Activated CD4-positive, alpha-beta T cell treated with anti-CD3 and anti-CD28 coated beads for 36 hours (primary cell): ENCODE measurements at regions of chr17 and their contacts with region 1.

Region 1: DNA sequence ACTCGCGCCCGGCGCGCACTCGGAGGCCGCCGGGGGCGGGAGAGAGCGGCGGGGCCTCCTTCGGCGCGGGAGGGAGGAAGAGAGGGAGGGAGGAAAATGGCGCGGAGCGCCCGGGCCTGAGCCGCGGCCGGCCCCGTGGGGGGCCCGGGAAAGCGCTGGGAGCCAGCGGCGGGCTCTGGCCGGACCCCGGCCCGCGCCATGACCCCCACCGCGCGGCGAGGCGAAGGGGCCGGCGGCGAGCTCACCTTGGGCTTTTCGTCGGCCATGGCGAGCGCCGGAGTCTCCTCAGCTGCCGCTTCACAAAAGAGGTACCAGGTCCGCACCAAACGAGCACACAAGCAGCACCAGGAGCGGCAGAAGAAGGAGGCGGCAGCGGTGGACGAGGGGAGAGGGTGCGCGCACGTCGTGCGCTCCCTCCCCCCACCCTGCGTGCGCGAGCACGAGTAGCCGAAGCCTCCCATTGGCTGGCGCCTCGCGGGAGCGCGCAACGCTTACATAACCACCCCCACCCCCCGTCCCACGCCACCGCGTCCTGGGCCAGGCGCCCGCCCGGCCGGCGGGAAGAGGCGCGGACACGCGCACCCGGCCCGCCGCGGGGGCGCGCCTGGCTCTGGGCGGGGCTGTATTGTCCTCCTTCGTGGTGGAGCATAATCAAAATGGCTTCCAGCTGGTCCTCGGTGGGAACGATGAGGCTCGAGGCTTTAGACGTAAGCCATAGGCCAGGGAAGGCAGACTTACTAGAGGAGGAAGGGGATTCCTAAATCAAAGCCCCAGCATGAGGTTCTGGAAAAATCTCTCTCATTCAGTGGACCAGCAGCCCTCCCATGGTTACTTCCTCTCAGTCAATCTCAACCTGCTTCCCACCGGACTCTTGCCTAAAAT is at the start of gene SUMO2:
- DNase-seq: peak; percentile 98
- ATAC-seq: peak; percentile 85
- H3K4me3 Mint-ChIP-seq: peak within 1 kb of the TSS; percentile 97
- H3K27ac Mint-ChIP-seq: peak within 1 kb of the TSS; percentile 96
- H3K4me1 Mint-ChIP-seq: peaks cover 45% of the 10 kb centered on the region
- H3K27me3 Mint-ChIP-seq: no peaks in the 10 kb centered on the region
- total RNA-seq, gene SUMO2: 594 to 727 TPM

Region 2: DNA sequence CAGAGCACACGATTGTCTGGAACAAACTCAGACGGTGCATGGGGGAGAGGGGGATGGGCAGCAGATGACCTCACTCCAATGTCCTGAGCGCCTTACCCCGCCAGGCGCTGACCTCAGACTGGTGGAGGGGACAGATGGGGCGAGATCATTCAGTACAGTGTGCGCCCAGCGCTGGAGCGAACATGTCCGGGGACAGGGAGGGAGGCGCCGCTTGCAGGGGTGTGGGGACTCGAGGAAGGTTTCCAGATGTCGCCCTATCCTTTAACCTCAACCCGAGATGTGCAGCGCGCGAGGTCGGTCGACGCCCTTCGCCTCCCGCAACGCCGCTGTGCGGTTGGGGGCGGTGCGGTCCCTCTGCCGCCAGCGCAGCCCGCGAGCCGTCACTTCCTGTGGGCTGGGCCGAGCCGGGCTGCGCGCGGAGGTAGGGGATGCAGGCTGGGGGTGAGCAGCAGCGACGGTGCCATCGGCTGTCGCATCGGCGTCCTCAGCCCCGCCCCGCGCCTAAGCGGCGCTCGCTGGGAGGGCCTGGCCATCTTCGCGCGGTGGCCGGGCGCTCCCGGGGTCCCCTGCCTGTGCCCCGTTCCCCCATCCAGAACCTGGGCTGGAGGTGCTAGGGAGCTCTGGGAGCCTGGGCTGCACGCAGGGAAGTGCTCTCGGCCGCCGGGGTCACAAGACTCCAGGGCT is 200.7 kb before region 1 on chr17:
- CTCF ChIA-PET with region 1: no interaction called
- POLR2A ChIA-PET with region 1: no interaction called
- intact Hi-C with region 1: loop called in 1 of 2 experiments (anchors 5 kb)
- DNase-seq: peak; percentile 90
- ATAC-seq: peak; percentile 95
- H3K4me3 Mint-ChIP-seq: peak overlapping the region; percentile 77
- H3K27ac Mint-ChIP-seq: peak overlapping the region; percentile 79
- H3K4me1 Mint-ChIP-seq: peaks cover 18% of the 10 kb centered on the region
- H3K27me3 Mint-ChIP-seq: peaks cover 5% of the 10 kb centered on the region

Region 3: GRCh38 chr17:75059369-75060345 is 123.2 kb before region 1 on chr17:
- CTCF ChIA-PET with region 1: interaction called, 3 read pairs
- POLR2A ChIA-PET with region 1: interaction called, 12 read pairs
- intact Hi-C with region 1: no loop called
- DNase-seq: no peak
- ATAC-seq: peak; percentile 39
- H3K4me3 Mint-ChIP-seq: no peak overlapping the region
- H3K27ac Mint-ChIP-seq: no peak overlapping the region
- H3K4me1 Mint-ChIP-seq: peaks cover 18% of the 10 kb centered on the region
- H3K27me3 Mint-ChIP-seq: no peaks in the 10 kb centered on the region

Region 4: GRCh38 chr17:75199886-75200618 is 17.2 kb after region 1 on chr17:
- CTCF ChIA-PET with region 1: interaction called, 42 read pairs
- POLR2A ChIA-PET with region 1: interaction called, 4 read pairs
- intact Hi-C with region 1: loop called (anchors 1 to 2 kb)
- DNase-seq: no peak
- ATAC-seq: no peak
- H3K4me3 Mint-ChIP-seq: no peak overlapping the region
- H3K27ac Mint-ChIP-seq: no peak overlapping the region
- H3K4me1 Mint-ChIP-seq: peaks cover 8% of the 10 kb centered on the region
- H3K27me3 Mint-ChIP-seq: no peaks in the 10 kb centered on the region

Region 5: DNA sequence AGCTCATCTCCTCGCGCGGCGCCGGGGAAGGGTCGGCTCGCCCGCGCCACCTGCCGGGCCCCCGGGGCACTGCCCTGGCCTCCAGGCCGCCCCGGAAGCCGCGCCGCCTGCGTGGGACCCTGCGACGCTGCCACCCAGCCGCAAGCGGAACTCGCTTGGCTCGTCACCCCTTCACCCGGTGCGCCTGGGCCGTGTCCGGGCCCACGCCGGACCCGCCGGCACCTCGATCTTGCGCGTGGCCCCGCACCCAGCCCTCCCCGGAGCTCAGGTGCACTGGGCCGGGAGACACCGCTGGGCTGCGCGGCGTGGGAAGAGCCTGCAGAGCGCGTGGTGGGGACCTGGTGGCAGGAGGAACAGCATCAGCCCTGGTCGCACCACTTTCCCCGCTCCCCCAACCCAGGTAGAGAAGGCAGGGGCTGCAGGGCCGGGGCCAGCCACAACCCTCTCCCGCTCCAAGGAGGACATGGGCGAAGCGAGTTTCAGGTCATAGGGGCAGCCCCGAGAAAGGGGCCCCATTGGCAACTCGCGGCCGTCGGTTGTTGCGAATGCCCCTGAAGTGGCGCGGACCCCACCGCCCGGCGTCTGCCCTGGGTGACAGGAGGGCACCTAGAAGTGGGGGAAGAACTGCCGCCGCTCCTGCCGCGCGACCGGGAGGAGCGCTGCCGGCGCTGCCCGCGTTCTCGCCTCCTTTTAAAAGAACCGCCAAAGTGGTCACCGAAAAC is 88.6 kb after region 1 on chr17:
- CTCF ChIA-PET with region 1: interaction called, 3 read pairs
- POLR2A ChIA-PET with region 1: interaction called, 3 read pairs
- intact Hi-C with region 1: loop called in 1 of 2 experiments (anchors 1 kb)
- DNase-seq: peak; percentile 93
- ATAC-seq: peak; percentile 79
- H3K4me3 Mint-ChIP-seq: peak overlapping the region; percentile 80
- H3K27ac Mint-ChIP-seq: peak overlapping the region; percentile 81
- H3K4me1 Mint-ChIP-seq: peaks cover 21% of the 10 kb centered on the region
- H3K27me3 Mint-ChIP-seq: no peaks in the 10 kb centered on the region

Region 6: DNA sequence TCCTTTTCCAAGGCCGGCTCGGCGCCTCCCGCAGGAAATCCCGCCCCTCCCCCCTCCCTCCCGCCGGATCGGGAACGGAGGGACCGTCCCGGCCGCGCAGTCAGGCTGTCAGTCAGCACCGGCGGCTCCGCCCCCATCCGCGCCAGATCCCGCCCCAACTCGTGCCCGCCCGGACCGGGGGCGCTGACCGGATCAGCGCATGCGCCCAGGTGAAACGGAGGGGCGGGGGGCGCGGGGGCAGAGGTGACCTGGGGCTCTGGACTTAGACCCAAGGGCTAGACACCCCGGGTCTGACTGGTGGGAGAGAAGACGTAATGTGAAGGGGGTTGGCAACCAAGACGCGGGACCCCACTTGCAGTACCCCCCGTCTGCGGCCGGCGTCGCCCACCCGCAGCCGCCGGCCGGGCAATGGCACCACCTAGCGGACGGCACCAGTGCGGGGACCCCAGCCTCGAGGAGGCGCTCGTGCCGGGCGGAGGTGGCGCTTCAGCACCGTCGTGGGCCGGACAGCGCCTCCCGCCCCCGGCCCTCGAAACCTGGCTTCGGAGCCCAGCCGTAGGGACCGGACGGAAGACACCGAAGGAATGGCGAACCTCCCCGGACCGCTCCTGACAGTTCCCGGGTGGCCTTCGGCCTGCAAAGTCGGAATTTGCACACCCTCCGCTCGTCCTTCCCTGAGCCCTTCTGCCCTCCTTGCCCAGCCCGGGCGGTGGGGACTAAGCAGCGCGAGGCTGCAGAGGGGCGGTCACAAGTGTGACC is 332.9 kb after region 1 on chr17 and contains the start of gene CASKIN2:
- CTCF ChIA-PET with region 1: no interaction called
- POLR2A ChIA-PET with region 1: no interaction called
- intact Hi-C with region 1: loop called in 1 of 2 experiments (anchors 1 kb)
- DNase-seq: peak; percentile 93
- ATAC-seq: peak; percentile 61
- H3K4me3 Mint-ChIP-seq: peak within 1 kb of the TSS; percentile 68
- H3K27ac Mint-ChIP-seq: no peak within 1 kb of the TSS
- H3K4me1 Mint-ChIP-seq: peaks cover 22% of the 10 kb centered on the region
- H3K27me3 Mint-ChIP-seq: peaks cover 3% of the 10 kb centered on the region
- total RNA-seq, gene CASKIN2: 2.9 to 3.0 TPM